HEK293T (cell line): ENCODE measurements at regions of chr6 and their contacts with region 1.

Region 1: GRCh38 chr6:35139908-35140655 is 1.1 kb downstream of the TCP11 start:
- DNase-seq: peak; percentile 65

Region 2: GRCh38 chr6:33696548-33697518 is 1443.2 kb before region 1 on chr6:
- CTCF ChIA-PET with region 1: no interaction called
- POLR2A ChIA-PET with region 1: no interaction called
- DNase-seq: no peak

Region 3: GRCh38 chr6:34986845-34987246 is 153.2 kb before region 1 on chr6:
- CTCF ChIA-PET with region 1: interaction called, 32 read pairs
- POLR2A ChIA-PET with region 1: no interaction called
- DNase-seq: peak; percentile 74

Region 4: GRCh38 chr6:35034411-35035191 is 105.5 kb before region 1 on chr6:
- CTCF ChIA-PET with region 1: no interaction called
- POLR2A ChIA-PET with region 1: no interaction called
- DNase-seq: no peak